Activated CD8-positive, alpha-beta T cell treated with anti-CD3 and anti-CD28 coated beads for 36 hours (primary cell): ENCODE measurements at regions of chr20 and their contacts with region 1.

Region 1: GRCh38 chr20:32497589-32498224 is 87.4 kb downstream of the NOL4L start:
- DNase-seq: no peak
- ATAC-seq: no peak
- H3K4me3 Mint-ChIP-seq: no peak overlapping the region
- H3K27ac Mint-ChIP-seq: no peak overlapping the region
- H3K4me1 Mint-ChIP-seq: peaks cover 29% of the 10 kb centered on the region
- H3K27me3 Mint-ChIP-seq: no peaks in the 10 kb centered on the region
- CTCF ChIP-seq: no peak

Region 2: GRCh38 chr20:32509639-32510066 is 11.9 kb after region 1 on chr20:
- CTCF ChIA-PET with region 1: interaction called, 5 read pairs
- POLR2A ChIA-PET with region 1: interaction called, 21 read pairs
- intact Hi-C with region 1: no loop called
- DNase-seq: peak; percentile 91
- ATAC-seq: peak; percentile 70
- H3K4me3 Mint-ChIP-seq: peak overlapping the region; percentile 79
- H3K27ac Mint-ChIP-seq: peak overlapping the region; percentile 93
- H3K4me1 Mint-ChIP-seq: peaks cover 87% of the 10 kb centered on the region
- H3K27me3 Mint-ChIP-seq: no peaks in the 10 kb centered on the region
- CTCF ChIP-seq: no peak